Activated CD4-positive, alpha-beta T cell treated with anti-CD3 and anti-CD28 coated beads for 36 hours (primary cell): ENCODE measurements at regions of chr15 and their contacts with region 1.

Region 1: GRCh38 chr15:48861813-48862431 is 16.0 kb upstream of the EID1 start:
- DNase-seq: peak; percentile 58
- ATAC-seq: peak; percentile 59
- H3K4me3 Mint-ChIP-seq: no peak overlapping the region
- H3K27ac Mint-ChIP-seq: no peak overlapping the region
- H3K4me1 Mint-ChIP-seq: peaks cover 6% of the 10 kb centered on the region
- H3K27me3 Mint-ChIP-seq: peaks cover 3% of the 10 kb centered on the region

Region 2: DNA sequence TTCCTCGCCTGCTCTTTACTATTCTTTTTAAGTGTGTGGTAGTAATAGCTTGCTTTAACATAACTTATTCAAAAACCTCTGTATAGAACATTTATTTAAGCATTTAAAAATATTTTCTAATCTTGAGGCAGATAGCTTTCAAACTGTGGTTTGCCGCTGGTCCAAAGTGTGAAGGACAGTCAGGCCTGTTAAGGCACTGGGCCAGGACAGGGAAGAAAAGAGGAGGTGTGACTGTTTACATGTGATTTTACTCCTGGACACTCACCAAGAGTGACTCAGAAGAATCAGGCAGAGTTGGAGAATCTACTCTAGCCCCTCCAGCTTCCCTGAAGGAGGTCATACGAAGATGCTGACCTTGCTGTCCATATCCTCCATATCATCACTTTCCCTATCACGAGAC is 95.7 kb before region 1 on chr15:
- CTCF ChIA-PET with region 1: no interaction called
- POLR2A ChIA-PET with region 1: no interaction called
- intact Hi-C with region 1: no loop called
- DNase-seq: no peak
- ATAC-seq: no peak
- H3K4me3 Mint-ChIP-seq: no peak overlapping the region
- H3K27ac Mint-ChIP-seq: no peak overlapping the region
- H3K4me1 Mint-ChIP-seq: no peaks in the 10 kb centered on the region
- H3K27me3 Mint-ChIP-seq: no peaks in the 10 kb centered on the region

Region 3: DNA sequence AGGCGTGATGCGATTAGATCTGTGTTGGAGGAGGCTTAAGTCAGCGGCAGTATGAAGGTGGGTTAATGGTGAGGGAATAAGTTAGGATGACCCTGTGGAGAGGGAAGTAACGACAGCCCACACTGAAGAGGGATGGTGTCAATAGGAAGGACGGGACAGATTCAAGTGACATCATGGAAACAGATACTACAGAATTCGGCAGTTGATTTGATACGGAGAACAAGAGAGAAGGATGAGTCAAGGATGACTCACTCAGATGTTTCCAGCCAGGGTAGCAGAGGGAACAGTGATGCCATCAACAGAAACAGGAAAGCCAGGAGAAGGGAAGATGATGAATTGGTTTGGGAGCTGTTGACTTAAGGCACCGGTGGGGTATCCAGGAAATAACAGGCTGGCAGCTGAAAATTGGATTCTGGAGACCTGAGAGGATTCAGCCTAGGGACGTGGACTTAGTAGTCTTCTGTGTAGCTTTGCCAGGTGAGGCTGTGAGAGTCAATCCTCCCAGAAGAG is 63.8 kb after region 1 on chr15:
- CTCF ChIA-PET with region 1: no interaction called
- POLR2A ChIA-PET with region 1: no interaction called
- intact Hi-C with region 1: loop called in 1 of 2 experiments (anchors 2 kb)
- DNase-seq: peak; percentile 30
- ATAC-seq: peak; percentile 50
- H3K4me3 Mint-ChIP-seq: peak overlapping the region; percentile 15
- H3K27ac Mint-ChIP-seq: peak overlapping the region; percentile 65
- H3K4me1 Mint-ChIP-seq: peaks cover 57% of the 10 kb centered on the region
- H3K27me3 Mint-ChIP-seq: peaks cover 20% of the 10 kb centered on the region

Region 4: GRCh38 chr15:48975472-48976419 is 113.8 kb after region 1 on chr15:
- CTCF ChIA-PET with region 1: interaction called, 76 read pairs
- POLR2A ChIA-PET with region 1: interaction called, 3 read pairs
- intact Hi-C with region 1: loop called in 1 of 2 experiments (anchors 1 kb)
- DNase-seq: peak; percentile 89
- ATAC-seq: peak; percentile 98
- H3K4me3 Mint-ChIP-seq: peak overlapping the region; percentile 46
- H3K27ac Mint-ChIP-seq: no peak overlapping the region
- H3K4me1 Mint-ChIP-seq: peaks cover 2% of the 10 kb centered on the region
- H3K27me3 Mint-ChIP-seq: peaks cover 13% of the 10 kb centered on the region

Region 5: GRCh38 chr15:49145651-49146609 is 284.0 kb after region 1 on chr15:
- CTCF ChIA-PET with region 1: interaction called, 18 read pairs
- POLR2A ChIA-PET with region 1: no interaction called
- intact Hi-C with region 1: loop called (anchors 1 to 2 kb)
- DNase-seq: peak; percentile 47
- ATAC-seq: peak; percentile 36
- H3K4me3 Mint-ChIP-seq: no peak overlapping the region
- H3K27ac Mint-ChIP-seq: peak overlapping the region; percentile 10
- H3K4me1 Mint-ChIP-seq: peaks cover 38% of the 10 kb centered on the region
- H3K27me3 Mint-ChIP-seq: no peaks in the 10 kb centered on the region

Region 6: DNA sequence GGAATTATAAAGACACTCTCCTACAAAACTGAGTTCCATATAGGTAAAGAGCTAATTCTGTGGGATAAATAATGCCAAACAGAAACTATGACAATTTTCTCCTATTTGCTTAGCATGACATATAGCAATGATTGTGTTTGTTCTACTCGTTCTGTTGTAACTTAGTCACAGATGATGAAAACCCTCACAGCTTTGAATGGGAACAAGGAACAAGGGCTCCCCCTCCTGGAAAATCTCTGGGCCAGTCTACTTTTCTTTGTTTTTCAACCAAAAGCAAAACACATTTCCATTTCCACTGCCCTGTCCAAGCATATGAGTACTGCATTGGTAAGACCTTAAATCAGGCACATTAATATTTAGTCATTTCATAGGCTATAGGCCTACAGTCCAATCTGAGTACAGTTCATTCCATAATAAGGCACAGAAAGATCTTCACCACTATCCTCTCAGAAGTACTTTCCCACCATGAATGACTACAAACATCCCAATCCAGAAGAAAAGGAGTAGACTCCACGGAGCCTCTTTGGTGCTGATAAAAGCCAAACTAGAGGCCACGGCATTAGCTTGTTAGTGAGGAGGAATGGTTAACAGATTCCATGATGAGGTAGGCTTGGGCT is 1190.0 kb after region 1 on chr15:
- CTCF ChIA-PET with region 1: no interaction called
- POLR2A ChIA-PET with region 1: no interaction called
- intact Hi-C with region 1: loop called in 1 of 2 experiments (anchors 5 kb)
- DNase-seq: peak; percentile 58
- ATAC-seq: peak; percentile 74
- H3K4me3 Mint-ChIP-seq: no peak overlapping the region
- H3K27ac Mint-ChIP-seq: no peak overlapping the region
- H3K4me1 Mint-ChIP-seq: peaks cover 10% of the 10 kb centered on the region
- H3K27me3 Mint-ChIP-seq: peaks cover 11% of the 10 kb centered on the region